ENCODE measurements at regions of chr19 and their contacts with region 1.

Region 1: GRCh38 chr19:11164879-11165406 is 9.4 kb upstream of the SPC24 start:
- DNase-seq: peak; percentile 98
- H3K4me3 ChIP-seq: peak overlapping the region in 2 of 4 donors; percentile 11 to 17
- H3K27ac ChIP-seq: peak overlapping the region; percentile 87 to 95 (median 92)
- H3K4me1 ChIP-seq: peaks cover 0 to 83% (median 76%) of the 10 kb centered on the region in 4 donors
- H3K27me3 ChIP-seq: no peaks in the 10 kb centered on the region
- CTCF ChIP-seq: no peak
- EP300 ChIP-seq: peak in 2 of 4 donors; percentile 35 to 37
- POLR2A ChIP-seq: no peak

Region 2: GRCh38 chr19:11194656-11195558 is 30.0 kb after region 1 on chr19:
- intact Hi-C with region 1: loop called (anchors 2 kb)
- DNase-seq: peak; percentile 82
- H3K4me3 ChIP-seq: peak overlapping the region; percentile 52 to 85 (median 74)
- H3K27ac ChIP-seq: peak overlapping the region; percentile 91 to 98 (median 94)
- H3K4me1 ChIP-seq: peaks cover 0 to 80% (median 72%) of the 10 kb centered on the region in 4 donors
- H3K27me3 ChIP-seq: no peaks in the 10 kb centered on the region
- CTCF ChIP-seq: no peak
- EP300 ChIP-seq: no peak
- POLR2A ChIP-seq: no peak

Region 3: GRCh38 chr19:11214387-11214786 is 49.4 kb after region 1 on chr19:
- intact Hi-C with region 1: no loop called
- DNase-seq: no peak
- H3K4me3 ChIP-seq: no peak overlapping the region
- H3K27ac ChIP-seq: no peak overlapping the region
- H3K4me1 ChIP-seq: no peaks in the 10 kb centered on the region
- H3K27me3 ChIP-seq: no peaks in the 10 kb centered on the region
- CTCF ChIP-seq: no peak
- EP300 ChIP-seq: no peak
- POLR2A ChIP-seq: no peak